ENCODE measurements at regions of chr10 and their contacts with region 1.

Region 1: GRCh38 chr10:50540069-50540825 is 83.5 kb downstream of the SGMS1 start:
- DNase-seq: no peak
- H3K4me3 Mint-ChIP-seq: peak overlapping the region; percentile 41
- H3K27ac Mint-ChIP-seq: peak overlapping the region; percentile 95
- H3K4me1 Mint-ChIP-seq: peaks cover 87% of the 10 kb centered on the region
- H3K27me3 Mint-ChIP-seq: no peaks in the 10 kb centered on the region

Region 2: GRCh38 chr10:50260791-50261281 is 279.4 kb before region 1 on chr10:
- intact Hi-C with region 1: loop called (anchors 2 kb)
- DNase-seq: no peak
- H3K4me3 Mint-ChIP-seq: no peak overlapping the region
- H3K27ac Mint-ChIP-seq: peak overlapping the region; percentile 23
- H3K4me1 Mint-ChIP-seq: peaks cover 20% of the 10 kb centered on the region
- H3K27me3 Mint-ChIP-seq: peaks cover 27% of the 10 kb centered on the region

Region 3: DNA sequence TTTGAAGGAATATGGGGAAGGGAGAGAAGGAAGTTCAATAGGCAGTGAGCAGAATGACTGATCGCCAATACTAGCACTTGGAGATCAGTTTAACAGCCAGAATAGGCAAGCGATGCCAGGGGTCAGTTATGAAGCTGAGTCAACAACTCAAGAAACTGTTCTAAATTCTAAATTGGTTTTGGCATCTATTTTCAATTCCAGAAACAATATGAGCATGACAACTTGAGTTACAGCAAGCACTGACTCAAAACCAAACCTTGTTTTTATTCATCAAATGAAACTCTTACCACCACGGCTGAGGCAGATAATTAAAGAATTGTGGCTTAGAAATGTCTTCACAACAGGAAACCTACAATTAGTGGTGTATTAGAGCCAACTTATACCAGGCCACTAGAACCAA is 108.5 kb before region 1 on chr10:
- intact Hi-C with region 1: loop called (anchors 1 kb)
- DNase-seq: no peak
- H3K4me3 Mint-ChIP-seq: peak overlapping the region; percentile 37
- H3K27ac Mint-ChIP-seq: peak overlapping the region; percentile 67
- H3K4me1 Mint-ChIP-seq: peaks cover 35% of the 10 kb centered on the region
- H3K27me3 Mint-ChIP-seq: no peaks in the 10 kb centered on the region

Region 4: DNA sequence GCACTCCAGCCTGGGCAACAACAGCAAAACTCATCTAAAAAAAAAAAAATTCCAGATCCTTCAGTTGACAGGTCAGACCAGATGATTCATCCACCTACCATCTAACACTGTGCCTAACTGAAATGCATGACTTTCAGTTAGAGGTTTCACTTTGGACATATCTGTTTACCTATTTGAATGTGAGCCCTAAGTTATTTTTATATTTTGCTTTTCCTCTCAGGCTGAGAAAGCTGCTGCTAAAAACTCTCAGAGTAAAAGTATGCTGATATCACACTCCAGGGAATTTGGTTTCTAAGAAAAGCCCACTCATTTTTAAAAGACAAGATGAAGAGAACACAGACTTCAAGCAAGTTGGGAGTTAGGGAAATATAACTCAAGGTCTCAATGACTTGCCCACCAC is 42.5 kb before region 1 on chr10:
- intact Hi-C with region 1: loop called (anchors 1 kb)
- DNase-seq: no peak
- H3K4me3 Mint-ChIP-seq: peak overlapping the region; percentile 45
- H3K27ac Mint-ChIP-seq: peak overlapping the region; percentile 82
- H3K4me1 Mint-ChIP-seq: peaks cover 54% of the 10 kb centered on the region
- H3K27me3 Mint-ChIP-seq: no peaks in the 10 kb centered on the region

Region 5: DNA sequence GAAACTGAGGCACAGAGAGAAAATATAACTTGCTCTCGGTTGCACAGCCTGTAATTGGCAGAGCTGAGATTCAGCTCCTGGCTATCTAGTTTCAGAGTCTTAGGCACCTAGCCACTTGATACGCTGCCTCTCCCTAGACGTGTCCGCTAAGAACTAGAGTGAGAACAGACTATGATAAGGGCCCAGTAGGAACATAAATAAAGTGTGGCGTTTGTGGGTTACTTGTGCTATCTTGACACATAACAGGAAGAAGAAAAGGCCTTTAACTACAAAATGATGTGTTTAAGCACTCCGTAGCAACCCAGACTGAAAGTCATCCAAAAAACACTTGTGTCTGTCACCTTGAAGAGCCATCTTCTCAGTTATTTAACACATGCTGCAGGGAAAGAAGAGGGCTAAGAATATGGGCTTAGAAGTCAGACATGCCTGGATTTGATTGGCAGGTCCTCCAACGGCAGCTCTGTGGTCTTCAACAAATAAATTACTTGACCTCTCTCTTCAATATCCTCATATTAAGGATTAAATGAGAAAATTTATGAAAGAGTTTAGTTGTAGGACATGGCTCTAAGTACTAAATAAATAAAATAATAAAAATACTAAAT is 12.7 kb before region 1 on chr10:
- intact Hi-C with region 1: loop called (anchors 1 kb)
- DNase-seq: no peak
- H3K4me3 Mint-ChIP-seq: no peak overlapping the region
- H3K27ac Mint-ChIP-seq: no peak overlapping the region
- H3K4me1 Mint-ChIP-seq: peaks cover 25% of the 10 kb centered on the region
- H3K27me3 Mint-ChIP-seq: no peaks in the 10 kb centered on the region

Region 6: DNA sequence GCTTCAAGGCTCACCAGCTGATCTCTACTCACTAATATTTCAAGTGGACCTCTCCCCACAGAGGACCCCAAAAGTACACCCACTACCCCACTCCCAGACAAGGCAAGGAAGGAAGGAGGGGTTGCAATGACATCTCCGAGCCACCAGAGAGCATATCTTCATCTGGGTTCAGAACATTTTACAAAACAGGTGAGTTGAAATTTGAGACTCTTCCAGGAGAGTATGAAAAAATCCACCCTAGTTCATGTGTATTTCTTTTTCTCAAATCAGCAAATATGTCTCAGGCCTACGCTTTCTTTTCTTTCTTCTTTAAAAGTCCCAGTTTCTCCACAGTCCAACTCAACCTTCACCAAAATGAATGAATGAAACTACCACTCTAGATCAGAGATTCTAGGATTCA is 21.6 kb after region 1 on chr10:
- intact Hi-C with region 1: no loop called
- DNase-seq: no peak
- H3K4me3 Mint-ChIP-seq: no peak overlapping the region
- H3K27ac Mint-ChIP-seq: no peak overlapping the region
- H3K4me1 Mint-ChIP-seq: no peaks in the 10 kb centered on the region
- H3K27me3 Mint-ChIP-seq: no peaks in the 10 kb centered on the region

Region 7: GRCh38 chr10:51879238-51879637 is 1339.0 kb after region 1 on chr10:
- intact Hi-C with region 1: loop called (anchors 5 kb)
- DNase-seq: peak; percentile 12
- H3K4me3 Mint-ChIP-seq: peak overlapping the region; percentile 67
- H3K27ac Mint-ChIP-seq: peak overlapping the region; percentile 52
- H3K4me1 Mint-ChIP-seq: peaks cover 26% of the 10 kb centered on the region
- H3K27me3 Mint-ChIP-seq: peaks cover 4% of the 10 kb centered on the region